ENCODE measurements at regions of chr1 and their contacts with region 1.

Region 1: GRCh38 chr1:26472901-26473845 is 933 bp downstream of the HMGN2 start:
- DNase-seq: peak; percentile 94
- H3K4me3 ChIP-seq: peak overlapping the region; percentile 99 to 100
- H3K27ac ChIP-seq: peak overlapping the region; percentile 100
- H3K4me1 ChIP-seq: no peaks in the 10 kb centered on the region
- H3K27me3 ChIP-seq: no peaks in the 10 kb centered on the region
- CTCF ChIP-seq: no peak
- POLR2A ChIP-seq: peak; percentile 74

Region 2: GRCh38 chr1:26431979-26432695 is 41.0 kb before region 1 on chr1 and contains the start of gene DHDDS:
- intact Hi-C with region 1: loop called (anchors 5 kb)
- DNase-seq: peak; percentile 96
- H3K4me3 ChIP-seq: peak within 1 kb of the TSS; percentile 50 to 52
- H3K27ac ChIP-seq: peak within 1 kb of the TSS; percentile 66 to 75
- H3K4me1 ChIP-seq: peaks cover 6% of the 10 kb centered on the region
- H3K27me3 ChIP-seq: no peaks in the 10 kb centered on the region
- CTCF ChIP-seq: peak in 2 of 4 experiments; percentile 8 to 34
- POLR2A ChIP-seq: peak; percentile 76
- total RNA-seq, gene DHDDS: 28.9 to 39.0 TPM

Region 3: GRCh38 chr1:26500488-26501175 is 27.5 kb after region 1 on chr1:
- intact Hi-C with region 1: loop called (anchors 1 kb)
- DNase-seq: peak; percentile 86
- H3K4me3 ChIP-seq: peak overlapping the region; percentile 65 to 67
- H3K27ac ChIP-seq: peak overlapping the region; percentile 90 to 92
- H3K4me1 ChIP-seq: no peaks in the 10 kb centered on the region
- H3K27me3 ChIP-seq: no peaks in the 10 kb centered on the region
- CTCF ChIP-seq: peak in 1 of 4 experiments; percentile 1
- POLR2A ChIP-seq: peak; percentile 57